ENCODE measurements at regions of chr11 and their contacts with region 1.

Region 1: GRCh38 chr11:111230122-111230465 is 15.4 kb upstream of the POU2AF2 start:
- DNase-seq: no peak
- H3K4me3 ChIP-seq: no peak overlapping the region
- H3K4me3 Mint-ChIP-seq: peak overlapping the region; percentile 64 to 87 (median 78)
- H3K27ac ChIP-seq: no peak overlapping the region
- H3K27ac Mint-ChIP-seq: peak overlapping the region in 1 of 7 donors; percentile 19
- H3K4me1 ChIP-seq: peaks cover 12% of the 10 kb centered on the region
- H3K4me1 Mint-ChIP-seq: peaks cover 12 to 22% (median 15%) of the 10 kb centered on the region in 4 donors
- H3K27me3 ChIP-seq: no peaks in the 10 kb centered on the region
- H3K27me3 Mint-ChIP-seq: peaks cover 9 to 18% of the 10 kb centered on the region in 2 donors

Region 2: DNA sequence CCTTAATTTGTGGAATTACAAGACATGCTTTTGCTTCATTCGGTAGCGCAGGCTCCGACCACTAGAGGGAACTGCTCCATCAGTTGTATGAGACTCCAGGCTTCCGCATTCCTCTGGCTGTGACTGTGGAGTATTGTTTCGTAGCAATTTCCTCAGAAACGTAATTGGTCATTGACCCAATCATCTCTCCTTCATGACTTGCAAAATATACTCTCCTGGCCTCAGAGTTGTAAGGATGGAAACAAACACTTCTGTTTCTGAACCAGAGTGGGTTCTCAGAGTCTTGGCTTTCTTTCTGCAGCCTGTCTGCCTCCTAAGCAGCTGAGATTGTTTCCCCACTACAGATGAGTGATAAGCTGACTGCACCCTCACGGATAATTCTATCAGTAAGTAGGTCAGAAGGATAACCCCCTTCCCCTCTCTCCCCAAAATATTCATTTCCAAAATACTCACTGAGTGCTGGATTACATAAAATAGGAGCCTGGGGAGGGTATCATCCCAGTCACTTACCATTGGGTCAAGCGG is 1283.7 kb before region 1 on chr11:
- CTCF ChIA-PET with region 1: no interaction called
- POLR2A ChIA-PET with region 1: no interaction called
- intact Hi-C with region 1: loop called (anchors 5 kb)
- DNase-seq: peak in 3 of 5 donors; percentile 4 to 26 (median 5)
- H3K4me3 ChIP-seq: no peak overlapping the region
- H3K4me3 Mint-ChIP-seq: peak overlapping the region in 6 of 8 donors; percentile 0 to 76 (median 54)
- H3K27ac ChIP-seq: no peak overlapping the region
- H3K27ac Mint-ChIP-seq: peak overlapping the region in 1 of 7 donors; percentile 6
- H3K4me1 ChIP-seq: no peaks in the 10 kb centered on the region
- H3K4me1 Mint-ChIP-seq: peaks cover 0 to 8% (median 6%) of the 10 kb centered on the region in 4 donors
- H3K27me3 ChIP-seq: no peaks in the 10 kb centered on the region
- H3K27me3 Mint-ChIP-seq: peaks cover 1 to 7% of the 10 kb centered on the region in 2 donors

Region 3: DNA sequence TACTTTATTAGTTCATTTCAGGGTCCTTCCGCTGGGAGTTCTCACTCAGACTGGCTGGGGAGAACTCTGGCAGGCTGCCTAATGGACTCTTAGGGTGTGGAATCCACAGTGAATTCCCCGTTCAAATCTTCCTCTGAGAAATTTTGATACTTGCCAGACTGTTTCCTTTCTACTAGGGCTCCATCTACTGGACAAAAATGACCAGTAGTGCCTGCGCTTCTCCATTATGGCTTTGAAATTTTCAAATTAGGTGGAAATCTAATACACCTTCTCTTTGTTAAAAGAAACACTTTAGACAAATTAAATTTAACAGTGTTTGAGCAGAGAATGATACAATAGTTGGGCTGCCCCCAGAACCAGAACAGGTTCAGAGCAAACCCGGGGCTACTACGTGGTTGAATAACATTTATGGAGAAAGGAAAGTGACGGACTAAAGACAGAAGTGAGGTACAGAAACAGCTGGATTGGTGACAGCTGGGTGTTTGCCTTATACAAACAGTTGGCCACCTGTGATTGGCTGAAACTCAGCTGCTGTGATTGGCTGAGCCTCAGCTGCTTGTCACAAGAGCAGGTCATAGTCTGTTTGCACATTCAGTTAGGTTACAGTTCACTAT is 853.3 kb before region 1 on chr11:
- CTCF ChIA-PET with region 1: no interaction called
- POLR2A ChIA-PET with region 1: no interaction called
- intact Hi-C with region 1: loop called (anchors 5 kb)
- DNase-seq: peak in 4 of 5 donors; percentile 30 to 40 (median 38)
- H3K4me3 ChIP-seq: no peak overlapping the region
- H3K4me3 Mint-ChIP-seq: no peak overlapping the region
- H3K27ac ChIP-seq: no peak overlapping the region
- H3K27ac Mint-ChIP-seq: no peak overlapping the region
- H3K4me1 ChIP-seq: peaks cover 11% of the 10 kb centered on the region
- H3K4me1 Mint-ChIP-seq: peaks cover 0 to 6% (median 5%) of the 10 kb centered on the region in 4 donors
- H3K27me3 ChIP-seq: no peaks in the 10 kb centered on the region
- H3K27me3 Mint-ChIP-seq: no peaks in the 10 kb centered on the region

Region 4: GRCh38 chr11:110434952-110435779 is 794.9 kb before region 1 on chr11:
- CTCF ChIA-PET with region 1: interaction called, 45 read pairs
- POLR2A ChIA-PET with region 1: no interaction called
- intact Hi-C with region 1: loop called (anchors 1 kb)
- DNase-seq: peak; percentile 21 to 45 (median 29)
- H3K4me3 ChIP-seq: no peak overlapping the region
- H3K4me3 Mint-ChIP-seq: peak overlapping the region in 2 of 8 donors; percentile 8 to 53
- H3K27ac ChIP-seq: no peak overlapping the region
- H3K27ac Mint-ChIP-seq: peak overlapping the region in 4 of 7 donors; percentile 24 to 61 (median 36)
- H3K4me1 ChIP-seq: peaks cover 41% of the 10 kb centered on the region
- H3K4me1 Mint-ChIP-seq: peaks cover 39 to 61% (median 53%) of the 10 kb centered on the region in 4 donors
- H3K27me3 ChIP-seq: no peaks in the 10 kb centered on the region
- H3K27me3 Mint-ChIP-seq: no peaks in the 10 kb centered on the region

Region 5: GRCh38 chr11:110447897-110448745 is 782.0 kb before region 1 on chr11:
- CTCF ChIA-PET with region 1: interaction called, 10 read pairs
- POLR2A ChIA-PET with region 1: no interaction called
- intact Hi-C with region 1: loop called (anchors 1 kb)
- DNase-seq: peak in 3 of 5 donors; percentile 19 to 24 (median 23)
- H3K4me3 ChIP-seq: no peak overlapping the region
- H3K4me3 Mint-ChIP-seq: no peak overlapping the region
- H3K27ac ChIP-seq: no peak overlapping the region
- H3K27ac Mint-ChIP-seq: no peak overlapping the region
- H3K4me1 ChIP-seq: peaks cover 2% of the 10 kb centered on the region
- H3K4me1 Mint-ChIP-seq: peaks cover 21 to 42% (median 26%) of the 10 kb centered on the region in 4 donors
- H3K27me3 ChIP-seq: no peaks in the 10 kb centered on the region
- H3K27me3 Mint-ChIP-seq: no peaks in the 10 kb centered on the region

Region 6: DNA sequence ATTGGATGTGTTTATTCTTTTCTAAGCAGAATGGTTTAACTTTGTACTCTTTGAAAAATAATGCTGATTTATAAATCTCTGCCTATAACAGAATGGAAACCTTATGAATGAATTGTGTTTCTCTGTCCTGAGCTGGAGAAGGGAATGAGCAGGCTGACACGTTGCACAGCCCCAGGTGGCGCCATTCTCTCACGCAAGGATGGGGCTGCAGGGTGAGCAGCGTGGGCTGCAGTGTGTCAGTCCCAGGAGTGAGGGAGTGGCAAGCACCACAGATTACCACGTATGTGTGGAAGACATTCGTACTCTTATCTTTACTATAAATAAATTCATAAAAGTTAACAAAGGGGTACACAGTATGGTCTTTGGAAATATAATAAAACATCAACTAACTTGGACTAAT is 766.9 kb before region 1 on chr11:
- CTCF ChIA-PET with region 1: no interaction called
- POLR2A ChIA-PET with region 1: no interaction called
- intact Hi-C with region 1: loop called (anchors 1 kb)
- DNase-seq: no peak
- H3K4me3 ChIP-seq: no peak overlapping the region
- H3K4me3 Mint-ChIP-seq: no peak overlapping the region
- H3K27ac ChIP-seq: no peak overlapping the region
- H3K27ac Mint-ChIP-seq: no peak overlapping the region
- H3K4me1 ChIP-seq: no peaks in the 10 kb centered on the region
- H3K4me1 Mint-ChIP-seq: peaks cover 0 to 9% (median 2%) of the 10 kb centered on the region in 4 donors
- H3K27me3 ChIP-seq: no peaks in the 10 kb centered on the region
- H3K27me3 Mint-ChIP-seq: no peaks in the 10 kb centered on the region

Region 7: DNA sequence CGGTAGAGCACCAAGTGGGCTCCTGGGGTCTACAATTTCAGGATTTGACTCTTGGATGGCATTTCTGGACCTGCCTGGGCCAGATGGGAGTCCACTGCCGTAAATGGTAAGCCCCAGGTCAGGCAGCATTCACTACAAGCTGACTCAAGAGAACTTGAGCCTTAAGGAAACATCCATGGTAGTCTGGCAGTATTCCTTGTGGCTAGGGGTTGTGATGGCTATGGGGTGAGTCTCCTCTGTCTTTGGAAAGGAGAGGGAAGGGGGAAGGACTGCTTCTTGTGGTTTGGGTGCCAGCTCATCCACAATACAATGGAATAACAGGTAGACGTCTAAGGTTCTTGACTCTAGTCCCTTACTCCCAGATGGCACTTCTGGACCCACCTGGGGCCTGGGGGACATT is 16.8 kb before region 1 on chr11:
- CTCF ChIA-PET with region 1: interaction called, 14 read pairs
- POLR2A ChIA-PET with region 1: no interaction called
- intact Hi-C with region 1: no loop called
- DNase-seq: no peak
- H3K4me3 ChIP-seq: no peak overlapping the region
- H3K4me3 Mint-ChIP-seq: no peak overlapping the region
- H3K27ac ChIP-seq: no peak overlapping the region
- H3K27ac Mint-ChIP-seq: no peak overlapping the region
- H3K4me1 ChIP-seq: no peaks in the 10 kb centered on the region
- H3K4me1 Mint-ChIP-seq: no peaks in the 10 kb centered on the region
- H3K27me3 ChIP-seq: no peaks in the 10 kb centered on the region
- H3K27me3 Mint-ChIP-seq: peaks cover 3 to 5% of the 10 kb centered on the region in 2 donors